ENCODE measurements at regions of chr6 and their contacts with region 1.

Region 1: GRCh38 chr6:110329714-110330436 is 28.3 kb downstream of the METTL24 start:
- DNase-seq: no peak
- ATAC-seq: peak; percentile 55
- H3K4me3 ChIP-seq: peak overlapping the region; percentile 14 to 26
- H3K27ac ChIP-seq: peak overlapping the region in 1 of 2 donors; percentile 83
- H3K4me1 ChIP-seq: peaks cover 0 to 2% of the 10 kb centered on the region in 2 donors
- H3K27me3 ChIP-seq: no peaks in the 10 kb centered on the region

Region 2: DNA sequence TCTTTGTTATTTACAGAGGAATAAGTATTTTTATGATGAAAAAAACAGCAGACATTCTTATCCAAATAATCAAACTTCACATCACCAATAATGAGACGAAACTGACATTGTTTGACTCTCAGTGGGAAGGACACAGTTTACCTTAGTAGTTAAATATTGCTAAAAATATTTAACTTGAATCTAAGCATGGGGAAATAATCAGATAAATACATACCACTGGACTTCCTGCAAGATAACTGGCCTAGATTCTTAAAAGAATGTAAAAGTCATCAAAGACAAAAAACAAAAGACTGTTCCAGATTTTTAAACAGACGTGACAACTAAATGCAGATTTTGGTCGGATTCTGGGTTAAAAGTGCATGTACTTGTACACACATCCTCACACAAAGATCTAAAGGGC is 602.3 kb before region 1 on chr6:
- intact Hi-C with region 1: no loop called
- DNase-seq: no peak
- ATAC-seq: no peak
- H3K4me3 ChIP-seq: no peak overlapping the region
- H3K27ac ChIP-seq: no peak overlapping the region
- H3K4me1 ChIP-seq: peaks cover 0 to 6% of the 10 kb centered on the region in 2 donors
- H3K27me3 ChIP-seq: no peaks in the 10 kb centered on the region

Region 3: GRCh38 chr6:110378552-110378951 is 48.7 kb after region 1 on chr6:
- intact Hi-C with region 1: loop called in 1 of 2 experiments (anchors 5 kb)
- DNase-seq: no peak
- ATAC-seq: no peak
- H3K4me3 ChIP-seq: no peak overlapping the region
- H3K27ac ChIP-seq: no peak overlapping the region
- H3K4me1 ChIP-seq: no peaks in the 10 kb centered on the region
- H3K27me3 ChIP-seq: no peaks in the 10 kb centered on the region